ENCODE measurements at regions of chr12 and their contacts with region 1.

Region 1: GRCh38 chr12:24838531-24838950 is 110.4 kb downstream of the BCAT1 start:
- DNase-seq: peak; percentile 76
- H3K4me3 Mint-ChIP-seq: peak overlapping the region; percentile 63
- H3K27ac Mint-ChIP-seq: peak overlapping the region; percentile 87
- H3K4me1 Mint-ChIP-seq: peaks cover 40% of the 10 kb centered on the region
- H3K27me3 Mint-ChIP-seq: no peaks in the 10 kb centered on the region

Region 2: GRCh38 chr12:23350808-23351207 is 1487.7 kb before region 1 on chr12:
- intact Hi-C with region 1: no loop called
- DNase-seq: no peak
- H3K4me3 Mint-ChIP-seq: no peak overlapping the region
- H3K27ac Mint-ChIP-seq: no peak overlapping the region
- H3K4me1 Mint-ChIP-seq: no peaks in the 10 kb centered on the region
- H3K27me3 Mint-ChIP-seq: no peaks in the 10 kb centered on the region

Region 3: DNA sequence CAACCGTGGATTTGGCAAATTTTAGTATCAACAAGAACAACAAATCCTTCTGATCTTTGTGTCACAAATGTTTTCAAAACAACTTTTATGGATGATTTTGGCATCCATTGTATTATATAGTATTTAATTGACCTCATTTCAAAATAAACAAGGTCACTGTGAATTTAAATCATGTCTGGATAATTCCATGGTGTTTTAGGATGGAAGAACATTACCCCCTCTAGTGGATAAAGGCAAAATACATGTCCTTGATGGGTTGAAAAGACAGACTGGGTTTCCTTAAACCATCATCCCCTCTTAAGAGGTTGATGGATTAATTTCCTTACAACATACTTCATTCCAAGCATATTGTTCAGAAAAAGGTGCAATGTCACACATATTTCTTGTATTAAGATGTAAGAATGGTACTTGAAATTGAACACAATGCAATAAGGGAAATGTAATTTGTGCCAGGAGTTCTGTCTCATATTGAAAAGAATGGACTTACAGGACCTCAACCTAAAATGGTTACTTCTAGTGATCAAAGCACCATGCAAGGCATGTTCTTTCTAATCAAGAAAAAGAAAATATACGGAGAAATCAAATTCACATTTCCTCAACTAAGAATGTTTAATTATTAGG is 241.7 kb before region 1 on chr12:
- intact Hi-C with region 1: loop called (anchors 1 kb)
- DNase-seq: no peak
- H3K4me3 Mint-ChIP-seq: no peak overlapping the region
- H3K27ac Mint-ChIP-seq: no peak overlapping the region
- H3K4me1 Mint-ChIP-seq: peaks cover 2% of the 10 kb centered on the region
- H3K27me3 Mint-ChIP-seq: peaks cover 8% of the 10 kb centered on the region

Region 4: GRCh38 chr12:24767016-24767415 is 71.5 kb before region 1 on chr12:
- intact Hi-C with region 1: loop called (anchors 1 kb)
- DNase-seq: no peak
- H3K4me3 Mint-ChIP-seq: no peak overlapping the region
- H3K27ac Mint-ChIP-seq: peak overlapping the region; percentile 55
- H3K4me1 Mint-ChIP-seq: peaks cover 4% of the 10 kb centered on the region
- H3K27me3 Mint-ChIP-seq: no peaks in the 10 kb centered on the region

Region 5: GRCh38 chr12:24822121-24822899 is 16.2 kb before region 1 on chr12:
- intact Hi-C with region 1: loop called (anchors 1 kb)
- DNase-seq: no peak
- H3K4me3 Mint-ChIP-seq: peak overlapping the region; percentile 32
- H3K27ac Mint-ChIP-seq: peak overlapping the region; percentile 34
- H3K4me1 Mint-ChIP-seq: peaks cover 24% of the 10 kb centered on the region
- H3K27me3 Mint-ChIP-seq: no peaks in the 10 kb centered on the region

Region 6: DNA sequence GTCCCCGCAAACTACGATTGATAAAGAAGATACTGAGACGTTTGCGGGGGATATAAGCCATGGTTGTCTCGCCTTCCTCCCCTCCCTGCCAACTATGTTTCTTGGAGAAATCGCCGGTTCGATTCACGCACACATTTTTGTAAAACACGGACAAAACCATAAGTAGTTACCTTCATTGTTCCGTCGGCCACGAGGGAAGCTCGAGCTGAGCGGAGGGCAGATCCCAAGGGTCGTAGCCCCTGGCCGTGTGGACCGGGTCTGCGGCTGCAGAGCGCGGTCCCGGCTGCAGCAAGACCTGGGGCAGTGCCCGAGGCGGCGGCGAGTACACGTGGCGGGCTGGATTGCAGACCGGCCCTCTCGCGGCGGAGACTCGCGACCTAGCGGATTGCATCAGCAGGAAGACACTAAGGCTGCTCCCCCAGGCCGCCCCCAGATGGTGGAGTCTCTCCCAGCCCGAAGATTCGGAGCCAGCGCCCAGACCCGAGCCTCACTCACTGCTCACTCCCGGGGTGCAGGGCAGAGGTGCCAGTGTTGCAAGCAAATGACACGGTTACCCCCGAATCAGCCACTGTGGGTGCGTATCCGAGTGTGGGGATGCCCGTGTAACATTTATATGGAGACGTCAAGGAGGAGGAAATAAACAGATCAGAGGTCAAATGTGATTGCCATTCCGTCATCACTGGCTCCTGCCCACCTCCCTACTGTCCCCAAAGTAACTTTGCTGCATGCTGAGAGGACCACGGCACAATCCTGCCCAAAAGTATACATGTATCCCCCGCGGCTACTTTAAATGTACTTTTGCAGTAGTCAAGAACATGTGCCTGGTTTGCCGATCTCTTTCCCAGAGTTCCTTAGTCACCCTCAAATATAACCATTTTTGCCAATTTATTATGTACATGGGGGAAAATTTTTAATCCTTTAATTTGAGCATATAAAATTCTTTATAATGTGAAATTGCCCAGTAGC is 110.5 kb after region 1 on chr12 and contains the start of gene BCAT1:
- intact Hi-C with region 1: loop called (anchors 1 kb)
- DNase-seq: peak; percentile 82
- H3K4me3 Mint-ChIP-seq: peak within 1 kb of the TSS; percentile 92
- H3K27ac Mint-ChIP-seq: peak within 1 kb of the TSS; percentile 93
- H3K4me1 Mint-ChIP-seq: peaks cover 52% of the 10 kb centered on the region
- H3K27me3 Mint-ChIP-seq: peaks cover 8% of the 10 kb centered on the region
- total RNA-seq, gene BCAT1: 49.7 and 51.9 TPM in 2 replicates

Region 7: DNA sequence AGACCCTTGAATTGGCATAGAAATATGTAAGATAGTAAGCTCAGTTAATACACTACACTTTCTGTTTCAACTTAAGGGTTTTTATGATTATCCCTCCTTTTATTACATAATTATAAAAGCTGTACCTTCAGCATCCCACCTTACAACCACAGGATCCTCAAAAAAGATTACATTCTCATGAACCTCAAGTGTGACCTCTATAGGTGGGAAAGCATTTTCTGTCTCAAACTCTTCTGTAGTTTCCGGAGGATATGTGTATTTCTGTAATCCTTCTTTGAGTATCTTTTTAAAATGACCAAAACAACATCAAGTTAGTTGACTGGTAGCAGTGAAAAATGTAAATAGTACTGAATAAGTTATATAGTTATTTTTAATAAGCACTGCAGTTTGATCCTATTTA is 280.5 kb after region 1 on chr12:
- intact Hi-C with region 1: no loop called
- DNase-seq: no peak
- H3K4me3 Mint-ChIP-seq: no peak overlapping the region
- H3K27ac Mint-ChIP-seq: no peak overlapping the region
- H3K4me1 Mint-ChIP-seq: no peaks in the 10 kb centered on the region
- H3K27me3 Mint-ChIP-seq: peaks cover 1% of the 10 kb centered on the region

Region 8: GRCh38 chr12:25130741-25131188 is 292.2 kb after region 1 on chr12:
- intact Hi-C with region 1: loop called (anchors 5 kb)
- DNase-seq: no peak
- H3K4me3 Mint-ChIP-seq: no peak overlapping the region
- H3K27ac Mint-ChIP-seq: no peak overlapping the region
- H3K4me1 Mint-ChIP-seq: no peaks in the 10 kb centered on the region
- H3K27me3 Mint-ChIP-seq: peaks cover 4% of the 10 kb centered on the region

Region 9: GRCh38 chr12:25364529-25365339 is 526.2 kb after region 1 on chr12:
- intact Hi-C with region 1: loop called (anchors 1 kb)
- DNase-seq: no peak
- H3K4me3 Mint-ChIP-seq: peak overlapping the region; percentile 40
- H3K27ac Mint-ChIP-seq: peak overlapping the region; percentile 91
- H3K4me1 Mint-ChIP-seq: peaks cover 15% of the 10 kb centered on the region
- H3K27me3 Mint-ChIP-seq: peaks cover 5% of the 10 kb centered on the region

Measured in activated CD4-positive, alpha-beta T cell treated with anti-CD3 and anti-CD28 coated beads, Interleukin-2, amount 10 ng/mL, durations not matched to agents 24 days and 14 days (primary cell).